ENCODE measurements at regions of chr1 and their contacts with region 1.

Region 1: GRCh38 chr1:109773146-109773899 is 9.6 kb upstream of the EPS8L3 start:
- DNase-seq: peak; percentile 85
- H3K4me3 Mint-ChIP-seq: no peak overlapping the region
- H3K27ac Mint-ChIP-seq: no peak overlapping the region
- H3K4me1 Mint-ChIP-seq: no peaks in the 10 kb centered on the region
- H3K27me3 Mint-ChIP-seq: no peaks in the 10 kb centered on the region

Region 2: GRCh38 chr1:109649491-109649914 is 123.8 kb before region 1 on chr1:
- CTCF ChIA-PET with region 1: interaction called, 283 read pairs
- intact Hi-C with region 1: no loop called
- DNase-seq: no peak
- H3K4me3 Mint-ChIP-seq: no peak overlapping the region
- H3K27ac Mint-ChIP-seq: no peak overlapping the region
- H3K4me1 Mint-ChIP-seq: no peaks in the 10 kb centered on the region
- H3K27me3 Mint-ChIP-seq: peaks cover 6% of the 10 kb centered on the region

Region 3: DNA sequence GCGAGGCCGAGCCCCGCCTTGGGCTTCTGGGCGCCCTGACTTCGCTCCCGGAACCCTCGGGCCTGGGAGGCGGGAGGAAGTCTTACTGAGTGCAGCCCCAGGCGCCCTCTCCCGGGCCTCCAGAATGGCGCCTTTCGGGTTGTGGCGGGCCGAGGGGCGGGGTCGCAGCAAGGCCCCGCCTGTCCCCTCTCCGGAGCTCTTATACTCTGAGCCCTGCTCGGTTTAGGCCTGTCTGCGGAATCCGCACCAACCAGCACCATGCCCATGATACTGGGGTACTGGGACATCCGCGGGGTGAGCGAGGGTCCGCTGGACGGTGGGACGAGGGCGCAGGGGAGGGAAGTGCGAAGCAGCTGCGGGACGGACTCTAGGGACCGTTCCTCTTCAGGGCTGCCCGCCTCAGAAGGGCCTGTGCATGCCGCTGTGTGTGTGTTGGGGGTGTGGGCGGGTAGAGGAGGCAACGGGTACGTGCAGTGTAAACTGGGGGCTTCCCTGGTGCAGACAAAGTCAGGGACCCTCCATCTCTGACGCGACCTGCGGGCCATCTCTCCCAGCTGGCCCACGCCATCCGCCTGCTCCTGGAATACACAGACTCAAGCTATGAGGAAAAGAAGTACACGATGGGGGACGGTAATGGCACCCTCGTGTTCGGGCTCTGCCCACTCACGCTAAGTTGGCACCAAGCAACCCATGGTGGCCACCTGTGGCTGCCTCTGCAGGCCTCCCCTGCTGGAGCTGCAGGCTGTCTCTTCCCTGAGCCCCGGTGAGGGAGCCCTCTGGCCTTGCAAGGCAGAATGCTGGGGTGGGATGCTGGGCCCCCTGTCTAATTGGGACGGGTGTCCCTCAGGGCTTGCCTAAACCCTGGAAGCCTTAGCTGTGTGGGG is 85.5 kb before region 1 on chr1 and contains the start of gene GSTM1:
- CTCF ChIA-PET with region 1: no interaction called
- intact Hi-C with region 1: no loop called
- DNase-seq: no peak
- H3K4me3 Mint-ChIP-seq: no peak within 1 kb of the TSS
- H3K27ac Mint-ChIP-seq: no peak within 1 kb of the TSS
- H3K4me1 Mint-ChIP-seq: no peaks in the 10 kb centered on the region
- H3K27me3 Mint-ChIP-seq: no peaks in the 10 kb centered on the region
- total RNA-seq, gene GSTM1: not detected

Region 4: GRCh38 chr1:109718491-109718890 is 54.8 kb before region 1 on chr1:
- CTCF ChIA-PET with region 1: interaction called, 7 read pairs
- intact Hi-C with region 1: loop called (anchors 1 kb)
- DNase-seq: no peak
- H3K4me3 Mint-ChIP-seq: no peak overlapping the region
- H3K27ac Mint-ChIP-seq: no peak overlapping the region
- H3K4me1 Mint-ChIP-seq: no peaks in the 10 kb centered on the region
- H3K27me3 Mint-ChIP-seq: peaks cover 12% of the 10 kb centered on the region

Region 5: DNA sequence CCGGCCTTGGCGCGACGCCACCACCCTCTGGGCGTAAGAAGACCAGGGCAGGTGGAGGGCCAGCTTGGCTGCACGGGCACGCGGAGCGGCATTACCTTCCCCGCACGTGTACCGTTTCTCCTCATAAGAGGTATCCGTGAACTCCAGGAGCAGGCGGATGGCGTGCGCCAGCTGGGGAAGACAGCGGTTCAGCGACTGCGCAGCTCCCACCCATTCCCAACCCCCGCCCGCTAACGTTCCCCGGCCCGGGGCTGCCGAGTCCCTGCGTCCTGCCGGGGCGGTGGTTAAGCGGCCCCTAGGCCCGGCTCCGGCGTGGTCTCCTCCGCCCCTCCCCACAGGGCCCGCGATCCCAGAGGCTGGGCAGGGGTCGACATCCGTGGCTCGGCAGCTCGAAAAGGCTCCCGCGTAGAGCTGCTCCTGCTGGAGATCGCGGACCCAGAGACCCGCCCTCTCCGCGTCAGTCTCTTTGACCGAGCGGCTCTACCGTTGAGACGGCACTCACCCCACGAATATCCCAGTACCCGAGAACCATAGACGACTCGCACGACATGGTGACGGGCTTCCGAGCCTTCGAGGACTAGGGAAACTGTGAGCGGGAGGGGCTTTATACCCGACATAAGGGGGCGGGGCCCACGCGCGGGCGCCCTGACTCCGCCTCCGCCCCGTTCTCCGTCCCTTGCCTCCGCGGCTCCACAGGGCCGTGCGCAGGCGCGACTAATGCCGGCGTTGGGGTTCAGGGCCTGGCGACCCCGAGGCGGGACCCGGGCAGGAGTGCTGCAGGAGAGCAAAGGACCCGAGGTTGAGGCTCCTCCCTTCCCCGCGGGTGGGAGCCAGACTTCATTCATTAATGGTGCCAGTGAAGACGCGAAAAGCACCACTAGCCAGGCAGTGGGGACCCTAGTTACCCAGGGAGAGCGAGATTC is 33.3 kb before region 1 on chr1:
- CTCF ChIA-PET with region 1: interaction called, 3 read pairs
- intact Hi-C with region 1: loop called (anchors 2 kb)
- DNase-seq: peak; percentile 75
- H3K4me3 Mint-ChIP-seq: peak overlapping the region; percentile 63
- H3K27ac Mint-ChIP-seq: no peak overlapping the region
- H3K4me1 Mint-ChIP-seq: peaks cover 8% of the 10 kb centered on the region
- H3K27me3 Mint-ChIP-seq: peaks cover 12% of the 10 kb centered on the region

Region 6: GRCh38 chr1:109790735-109791494 is 17.6 kb after region 1 on chr1:
- CTCF ChIA-PET with region 1: interaction called, 73 read pairs
- intact Hi-C with region 1: loop called (anchors 1 kb)
- DNase-seq: peak; percentile 91
- H3K4me3 Mint-ChIP-seq: no peak overlapping the region
- H3K27ac Mint-ChIP-seq: peak overlapping the region; percentile 81
- H3K4me1 Mint-ChIP-seq: peaks cover 57% of the 10 kb centered on the region
- H3K27me3 Mint-ChIP-seq: no peaks in the 10 kb centered on the region

Region 7: DNA sequence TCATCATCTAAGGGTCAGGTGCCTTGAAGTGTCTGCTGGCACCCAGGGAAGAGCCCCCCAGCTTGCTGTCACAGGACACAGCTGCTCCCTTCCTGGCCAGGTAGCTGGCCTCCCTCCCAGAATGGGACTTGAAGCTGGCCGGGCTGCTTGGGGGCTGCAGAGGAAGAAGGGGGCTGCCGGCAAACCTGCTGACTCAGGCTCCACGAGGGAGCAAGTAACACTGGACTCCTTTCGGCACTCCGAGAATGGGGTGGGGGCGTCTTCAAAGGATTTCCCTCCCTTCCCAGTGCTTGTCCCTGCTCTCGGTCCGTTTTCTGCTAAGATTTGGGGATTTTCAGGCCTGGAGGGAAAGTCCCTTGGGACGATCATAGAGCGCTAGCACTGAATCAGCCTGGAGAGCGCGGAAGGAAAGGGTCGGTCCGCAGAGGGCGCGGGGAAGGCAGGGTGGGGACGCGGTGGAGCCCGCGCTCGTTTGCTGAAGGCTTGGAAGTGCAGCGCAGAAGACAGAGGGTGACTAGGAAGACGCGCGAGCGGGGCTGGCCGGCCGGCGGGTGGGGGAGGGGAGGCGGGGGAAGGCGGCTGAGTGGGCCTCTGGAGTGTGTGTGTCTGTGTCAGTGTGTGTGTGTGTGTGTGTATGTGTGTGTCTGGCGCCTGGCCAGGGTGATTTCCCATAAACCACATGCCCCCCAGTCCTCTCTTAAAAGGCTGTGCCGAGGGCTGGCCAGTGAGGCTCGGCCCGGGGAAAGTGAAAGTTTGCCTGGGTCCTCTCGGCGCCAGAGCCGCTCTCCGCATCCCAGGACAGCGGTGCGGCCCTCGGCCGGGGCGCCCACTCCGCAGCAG is 137.0 kb after region 1 on chr1 and contains the start of gene CSF1:
- CTCF ChIA-PET with region 1: interaction called, 5 read pairs
- intact Hi-C with region 1: loop called (anchors 1 kb)
- DNase-seq: peak; percentile 69
- H3K4me3 Mint-ChIP-seq: peak within 1 kb of the TSS; percentile 82
- H3K27ac Mint-ChIP-seq: peak within 1 kb of the TSS; percentile 81
- H3K4me1 Mint-ChIP-seq: peaks cover 53% of the 10 kb centered on the region
- H3K27me3 Mint-ChIP-seq: no peaks in the 10 kb centered on the region
- total RNA-seq, gene CSF1: 12.0 to 13.5 TPM

Region 8: GRCh38 chr1:110011527-110012041 is 238.3 kb after region 1 on chr1:
- CTCF ChIA-PET with region 1: interaction called, 12 read pairs
- intact Hi-C with region 1: loop called (anchors 1 kb)
- DNase-seq: peak; percentile 51
- H3K4me3 Mint-ChIP-seq: no peak overlapping the region
- H3K27ac Mint-ChIP-seq: no peak overlapping the region
- H3K4me1 Mint-ChIP-seq: no peaks in the 10 kb centered on the region
- H3K27me3 Mint-ChIP-seq: no peaks in the 10 kb centered on the region

Region 9: GRCh38 chr1:110390692-110391245 is 617.4 kb after region 1 on chr1 and contains the start of gene SLC16A4:
- CTCF ChIA-PET with region 1: no interaction called
- intact Hi-C with region 1: no loop called
- DNase-seq: no peak
- H3K4me3 Mint-ChIP-seq: no peak within 1 kb of the TSS
- H3K27ac Mint-ChIP-seq: no peak within 1 kb of the TSS
- H3K4me1 Mint-ChIP-seq: peaks cover 4% of the 10 kb centered on the region
- H3K27me3 Mint-ChIP-seq: no peaks in the 10 kb centered on the region
- total RNA-seq, gene SLC16A4: 0.14 to 0.37 TPM

Measured in activated naive CD4-positive, alpha-beta T cell treated with anti-CD3 and anti-CD28 coated beads for 36 hours (primary cell).